Vagina (tissue), 2 donors: ENCODE measurements at regions of chr20 and their contacts with region 1.

Region 1: GRCh38 chr20:21901470-21902275 is 196.2 kb downstream of the PAX1 start:
- DNase-seq: no peak
- H3K4me3 ChIP-seq: no peak overlapping the region
- H3K27ac ChIP-seq: no peak overlapping the region
- H3K4me1 ChIP-seq: no peaks in the 10 kb centered on the region
- H3K27me3 ChIP-seq: no peaks in the 10 kb centered on the region
- CTCF ChIP-seq: no peak
- POLR2A ChIP-seq: no peak

Region 2: GRCh38 chr20:21832442-21833385 is 69.0 kb before region 1 on chr20:
- intact Hi-C with region 1: loop called (anchors 10 kb)
- DNase-seq: no peak
- H3K4me3 ChIP-seq: no peak overlapping the region
- H3K27ac ChIP-seq: no peak overlapping the region
- H3K4me1 ChIP-seq: no peaks in the 10 kb centered on the region
- H3K27me3 ChIP-seq: no peaks in the 10 kb centered on the region
- CTCF ChIP-seq: no peak
- POLR2A ChIP-seq: no peak